Ovary (tissue), 10 donors: ENCODE measurements at regions of chr3 and their contacts with region 1.

Region 1: GRCh38 chr3:157081681-157082210 is 78.2 kb downstream of the CCNL1 start:
- DNase-seq: peak; percentile 87 to 93 (median 93)
- H3K4me3 ChIP-seq: no peak overlapping the region
- H3K27ac ChIP-seq: no peak overlapping the region
- H3K4me1 ChIP-seq: peaks cover 3% of the 10 kb centered on the region
- H3K27me3 ChIP-seq: no peaks in the 10 kb centered on the region
- CTCF ChIP-seq: peak; percentile 77 to 97 (median 96)
- EP300 ChIP-seq: no peak
- POLR2A ChIP-seq: no peak

Region 2: GRCh38 chr3:156151824-156152428 is 929.8 kb before region 1 on chr3:
- intact Hi-C with region 1: loop called in 3 of 4 experiments (anchors 5 to 10 kb)
- DNase-seq: peak; percentile 38 to 73 (median 47)
- H3K4me3 ChIP-seq: no peak overlapping the region
- H3K27ac ChIP-seq: no peak overlapping the region
- H3K4me1 ChIP-seq: peaks cover 11% of the 10 kb centered on the region
- H3K27me3 ChIP-seq: no peaks in the 10 kb centered on the region
- CTCF ChIP-seq: peak in 2 of 3 donors; percentile 14 to 51
- EP300 ChIP-seq: no peak
- POLR2A ChIP-seq: no peak

Region 3: GRCh38 chr3:156554842-156555687 is 526.7 kb before region 1 on chr3 and contains the start of gene SSR3:
- intact Hi-C with region 1: loop called in 1 of 4 experiments (anchors 10 kb)
- DNase-seq: peak; percentile 99 to 100 (median 99)
- H3K4me3 ChIP-seq: peak within 1 kb of the TSS; percentile 96
- H3K27ac ChIP-seq: peak within 1 kb of the TSS; percentile 41 to 66
- H3K4me1 ChIP-seq: peaks cover 12% of the 10 kb centered on the region
- H3K27me3 ChIP-seq: no peaks in the 10 kb centered on the region
- CTCF ChIP-seq: peak; percentile 31 to 74 (median 61)
- EP300 ChIP-seq: no peak
- POLR2A ChIP-seq: peak; percentile 47
- total RNA-seq, gene SSR3: 53.4 to 303 (median 160) TPM

Region 4: DNA sequence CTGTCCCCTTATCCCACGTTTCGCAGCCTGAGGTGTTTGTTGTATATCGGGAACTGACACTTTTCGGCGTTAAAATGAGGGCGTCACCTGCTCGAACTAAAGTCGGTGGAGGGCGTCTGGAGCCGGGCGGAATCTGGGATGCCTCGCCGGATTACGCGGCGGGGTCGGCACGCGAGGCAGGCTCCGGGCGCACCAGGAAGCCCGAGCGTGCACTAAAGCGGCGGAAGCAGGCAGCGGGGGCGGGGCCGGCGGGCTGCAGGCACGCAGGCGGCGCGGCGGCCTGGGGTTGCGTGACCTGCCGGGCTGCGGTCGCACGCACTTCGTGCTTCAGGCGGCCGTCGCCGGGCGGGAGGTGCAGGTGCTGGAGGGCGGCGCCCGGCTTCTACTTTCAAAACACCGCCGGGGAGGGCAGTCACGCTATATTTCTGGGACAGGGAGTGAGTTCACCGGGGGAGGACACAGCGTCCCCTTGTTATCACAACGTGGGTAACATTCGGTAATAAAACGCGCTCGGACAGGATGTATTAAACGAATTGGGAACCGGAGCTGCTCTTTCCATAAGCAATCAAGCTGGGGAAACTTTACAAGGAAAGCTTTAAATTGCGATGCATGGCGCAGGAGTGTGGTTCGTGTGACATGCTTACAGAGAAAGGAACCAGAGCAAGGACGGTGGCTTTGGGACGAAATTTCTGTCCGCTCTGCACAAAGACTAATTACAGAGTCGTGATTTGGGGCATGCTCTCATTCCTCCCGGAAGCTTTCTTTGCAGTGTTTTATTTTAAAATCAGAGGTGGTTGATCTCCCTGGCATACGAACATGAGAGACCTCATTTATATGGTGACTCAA is 264.7 kb before region 1 on chr3:
- intact Hi-C with region 1: loop called in 2 of 4 experiments (anchors 10 kb)
- DNase-seq: peak; percentile 75 to 87 (median 77)
- H3K4me3 ChIP-seq: peak overlapping the region; percentile 44
- H3K27ac ChIP-seq: peak overlapping the region; percentile 62 to 66
- H3K4me1 ChIP-seq: no peaks in the 10 kb centered on the region
- H3K27me3 ChIP-seq: no peaks in the 10 kb centered on the region
- CTCF ChIP-seq: no peak
- EP300 ChIP-seq: peak; percentile 56
- POLR2A ChIP-seq: no peak

Region 5: DNA sequence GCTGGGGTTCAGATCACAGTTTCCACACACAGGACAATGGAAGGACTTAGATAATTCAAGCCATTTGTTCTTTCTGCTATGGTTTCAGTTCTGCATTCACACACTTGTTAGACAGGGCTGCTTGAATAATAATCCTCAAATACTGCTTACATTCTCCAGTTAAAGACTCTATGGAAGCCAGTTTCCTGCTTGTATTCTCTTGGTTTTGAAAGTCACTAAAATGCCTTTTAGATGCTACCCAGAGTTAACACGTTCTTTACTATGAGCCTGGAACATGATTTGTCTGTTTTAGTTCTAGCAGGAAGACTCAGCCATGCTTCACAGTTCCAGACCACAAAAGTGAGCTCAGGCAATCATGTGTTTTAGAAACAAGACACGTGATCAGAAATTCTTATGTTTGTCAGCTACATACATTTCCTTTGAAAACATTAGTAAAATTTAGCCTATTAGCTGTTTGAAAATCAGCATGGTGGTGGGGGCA is 103.2 kb before region 1 on chr3:
- intact Hi-C with region 1: no loop called
- DNase-seq: no peak
- H3K4me3 ChIP-seq: no peak overlapping the region
- H3K27ac ChIP-seq: no peak overlapping the region
- H3K4me1 ChIP-seq: no peaks in the 10 kb centered on the region
- H3K27me3 ChIP-seq: no peaks in the 10 kb centered on the region
- CTCF ChIP-seq: no peak
- EP300 ChIP-seq: no peak
- POLR2A ChIP-seq: no peak

Region 6: DNA sequence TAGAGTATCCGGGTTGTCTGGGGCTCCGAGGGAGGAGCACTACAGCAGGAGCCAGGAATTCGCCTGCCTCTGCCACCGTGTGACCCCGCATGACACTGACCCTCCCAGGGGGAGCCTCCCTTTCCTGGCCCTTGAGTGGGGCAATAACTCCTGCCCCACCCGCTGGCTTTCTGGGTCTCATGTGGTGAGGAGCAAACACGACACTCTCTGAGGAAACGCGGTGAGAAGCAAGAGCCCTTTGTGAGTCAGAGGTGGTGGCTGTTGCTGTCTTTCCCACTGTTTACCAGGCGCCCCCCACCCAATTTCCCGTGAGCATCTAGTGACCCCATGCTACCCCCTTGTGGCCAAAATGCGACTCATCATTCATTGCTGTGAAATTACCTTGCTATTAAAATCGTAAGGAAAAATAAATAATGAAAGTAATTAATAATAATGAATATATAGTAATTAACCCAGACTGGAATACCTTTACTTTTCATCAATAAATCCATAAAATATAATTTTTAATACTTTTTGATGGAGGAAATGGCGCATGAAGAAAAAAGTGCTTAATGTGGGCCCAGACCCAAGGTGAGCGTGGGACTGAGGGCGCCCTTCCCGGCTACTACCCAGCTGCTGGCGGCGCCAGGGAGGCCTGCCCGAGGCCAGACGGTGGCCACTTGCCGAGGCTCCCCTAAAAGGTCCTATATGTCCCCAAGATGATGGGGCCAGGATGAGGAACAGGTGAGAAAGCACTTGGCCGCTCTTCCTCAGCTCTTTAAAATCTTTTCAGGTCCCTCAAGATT is 48.9 kb after region 1 on chr3:
- intact Hi-C with region 1: loop called in 2 of 4 experiments (anchors 5 kb)
- DNase-seq: peak; percentile 35 to 60 (median 54)
- H3K4me3 ChIP-seq: no peak overlapping the region
- H3K27ac ChIP-seq: peak overlapping the region; percentile 26 to 38
- H3K4me1 ChIP-seq: peaks cover 10% of the 10 kb centered on the region
- H3K27me3 ChIP-seq: no peaks in the 10 kb centered on the region
- CTCF ChIP-seq: peak in 2 of 3 donors; percentile 30 to 58
- EP300 ChIP-seq: no peak
- POLR2A ChIP-seq: no peak

Region 7: DNA sequence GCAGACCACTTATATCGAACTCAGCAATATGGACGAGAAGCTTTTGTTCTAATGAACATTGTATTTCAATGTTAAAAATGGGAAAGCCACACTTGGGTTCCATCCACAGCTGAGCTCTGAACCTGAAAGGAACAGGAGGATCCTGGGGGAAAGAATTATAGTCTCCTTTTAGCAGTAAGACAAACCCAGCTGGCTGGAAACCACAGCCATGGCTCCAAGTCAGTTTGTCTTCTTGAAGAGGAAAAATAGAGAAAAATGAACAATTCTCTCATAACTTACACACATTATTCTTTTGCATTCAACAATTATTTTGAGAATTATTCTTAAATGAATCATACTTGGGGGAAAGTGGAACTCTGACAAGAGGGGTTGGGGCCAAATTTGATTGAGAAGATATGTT is 570.6 kb after region 1 on chr3:
- intact Hi-C with region 1: no loop called
- DNase-seq: no peak
- H3K4me3 ChIP-seq: no peak overlapping the region
- H3K27ac ChIP-seq: no peak overlapping the region
- H3K4me1 ChIP-seq: no peaks in the 10 kb centered on the region
- H3K27me3 ChIP-seq: no peaks in the 10 kb centered on the region
- CTCF ChIP-seq: no peak
- EP300 ChIP-seq: no peak
- POLR2A ChIP-seq: no peak